BJ (cell line): ENCODE measurements at regions of chrX and their contacts with region 1.

Region 1: GRCh38 chrX:132592880-132593279 is 104.0 kb upstream of the MBNL3 start:
- DNase-seq: no peak
- H3K4me3 ChIP-seq: no peak overlapping the region
- H3K27me3 ChIP-seq: no peaks in the 10 kb centered on the region
- CTCF ChIP-seq: peak; percentile 44

Region 2: DNA sequence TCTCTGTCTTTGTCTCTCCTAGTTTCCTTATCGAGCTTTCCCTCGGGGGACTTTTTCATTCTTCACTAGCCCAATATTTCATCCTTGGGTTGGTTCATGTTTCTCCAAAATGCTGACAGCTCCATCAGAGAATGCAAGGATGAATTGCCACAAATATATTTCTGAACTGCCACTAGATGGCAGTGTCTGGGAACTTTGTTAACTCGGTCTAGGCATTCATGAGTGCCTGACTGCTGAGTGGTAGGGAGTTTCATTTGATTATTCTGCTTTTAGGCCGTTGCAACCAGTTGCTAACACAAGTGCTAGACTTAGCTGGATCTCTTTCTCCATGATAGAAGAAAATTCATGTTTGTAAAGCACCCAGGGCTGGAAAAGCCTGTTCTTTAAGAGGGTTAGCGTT is 300.1 kb before region 1 on chrX:
- CTCF ChIA-PET with region 1: interaction called, 10 read pairs
- POLR2A ChIA-PET with region 1: no interaction called
- DNase-seq: no peak
- H3K4me3 ChIP-seq: no peak overlapping the region
- H3K27me3 ChIP-seq: no peaks in the 10 kb centered on the region
- CTCF ChIP-seq: peak; percentile 47

Region 3: DNA sequence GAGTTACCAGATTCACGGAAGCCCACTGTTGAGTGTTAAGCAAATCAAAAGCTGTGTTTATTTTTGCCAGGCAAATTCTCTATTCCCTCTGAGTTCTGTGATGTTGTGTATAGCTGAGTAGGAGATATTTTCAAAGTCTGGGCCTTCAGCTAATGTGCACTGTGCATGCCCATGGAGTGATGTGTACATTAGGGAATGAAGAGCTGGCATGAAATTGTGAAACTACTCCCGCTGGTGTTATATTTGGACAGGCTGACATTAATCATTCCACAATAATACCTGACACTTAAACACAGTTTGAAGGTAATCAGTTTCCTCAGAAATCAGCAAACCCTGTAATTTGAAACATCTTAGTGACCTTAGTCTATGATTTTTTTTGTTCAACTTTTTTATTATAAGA is 15.9 kb before region 1 on chrX:
- CTCF ChIA-PET with region 1: no interaction called
- POLR2A ChIA-PET with region 1: no interaction called
- DNase-seq: no peak
- H3K4me3 ChIP-seq: no peak overlapping the region
- H3K27me3 ChIP-seq: no peaks in the 10 kb centered on the region
- CTCF ChIP-seq: no peak

Region 4: DNA sequence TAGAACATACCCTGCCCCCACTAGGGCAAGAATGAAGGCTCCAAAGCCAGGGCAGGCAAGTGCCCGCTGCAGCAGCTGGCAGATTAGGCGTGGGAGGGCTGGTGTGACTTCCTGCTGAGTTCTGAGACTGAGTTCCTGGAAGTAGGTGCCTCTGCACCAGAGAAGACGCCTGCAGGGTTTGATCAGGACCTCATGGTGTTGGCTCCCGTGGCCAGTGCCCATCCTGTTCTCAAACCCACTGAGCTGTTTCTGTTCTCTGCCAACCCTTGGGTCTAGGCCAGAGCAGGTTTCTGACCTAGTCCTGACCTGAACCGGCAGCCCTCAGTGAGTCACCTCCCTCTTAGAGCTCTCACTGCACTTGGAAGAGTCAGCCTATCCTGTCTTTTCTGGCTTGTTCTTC is 144.9 kb after region 1 on chrX:
- CTCF ChIA-PET with region 1: no interaction called
- POLR2A ChIA-PET with region 1: no interaction called
- DNase-seq: no peak
- H3K4me3 ChIP-seq: no peak overlapping the region
- H3K27me3 ChIP-seq: no peaks in the 10 kb centered on the region
- CTCF ChIP-seq: no peak